ENCODE measurements at regions of chr5 and their contacts with region 1.

Region 1: GRCh38 chr5:36301858-36302603 is at the start of gene RANBP3L:
- DNase-seq: peak; percentile 46 to 71
- H3K4me3 ChIP-seq: peak within 1 kb of the TSS; percentile 18 to 32 (median 27)
- H3K27ac ChIP-seq: peak within 1 kb of the TSS; percentile 73 to 88 (median 80)
- H3K4me1 ChIP-seq: peaks cover 7 to 55% (median 22%) of the 10 kb centered on the region in 4 donors
- H3K27me3 ChIP-seq: no peaks in the 10 kb centered on the region
- CTCF ChIP-seq: no peak
- EP300 ChIP-seq: no peak
- POLR2A ChIP-seq: no peak
- total RNA-seq, gene RANBP3L: 2.3 to 17.0 (median 2.9) TPM in 3 of 5 donors, not detected in the others

Region 2: DNA sequence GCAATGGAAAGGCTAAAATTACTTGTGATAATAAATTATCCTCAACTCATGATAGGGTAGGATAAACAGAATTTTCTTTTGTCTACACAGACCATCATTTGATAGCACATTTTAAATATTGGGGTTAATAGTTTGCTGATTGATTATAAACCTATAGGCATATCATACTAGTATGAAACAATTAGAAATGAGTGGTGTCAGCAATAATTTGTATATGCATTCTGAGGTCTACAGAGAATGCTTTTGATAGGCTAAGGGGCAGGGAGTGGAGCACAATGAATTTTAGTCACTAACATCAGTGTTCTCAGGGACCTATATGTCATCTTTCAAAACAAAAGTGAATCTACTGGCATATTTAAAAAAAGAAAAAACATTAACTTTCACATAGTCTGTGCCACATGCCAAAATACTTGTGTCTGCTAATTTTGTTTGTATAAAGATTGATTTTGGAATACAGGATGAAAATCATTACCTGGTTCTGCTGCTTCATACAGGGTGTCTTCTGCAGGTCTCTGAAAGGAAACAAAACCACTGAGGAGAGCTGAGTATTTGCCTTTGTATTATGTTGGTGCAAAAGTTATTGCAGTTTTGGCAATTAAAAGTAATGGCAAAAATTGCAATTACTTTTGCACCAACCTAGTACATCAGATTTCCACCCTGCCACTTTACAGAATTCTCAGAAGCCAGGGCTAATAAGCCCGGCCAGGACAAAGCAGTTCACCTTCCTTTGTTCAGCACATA is 32.4 kb before region 1 on chr5:
- intact Hi-C with region 1: loop called (anchors 5 kb)
- DNase-seq: no peak
- H3K4me3 ChIP-seq: no peak overlapping the region
- H3K27ac ChIP-seq: no peak overlapping the region
- H3K4me1 ChIP-seq: peaks cover 0 to 13% (median 5%) of the 10 kb centered on the region in 4 donors
- H3K27me3 ChIP-seq: no peaks in the 10 kb centered on the region
- CTCF ChIP-seq: no peak
- EP300 ChIP-seq: no peak
- POLR2A ChIP-seq: no peak